B cell (primary cell): ENCODE measurements at regions of chr2 and their contacts with region 1.

Region 1: GRCh38 chr2:180980106-180980942 is at the start of gene UBE2E3:
- DNase-seq: peak; percentile 91
- ATAC-seq: peak; percentile 76
- H3K4me3 ChIP-seq: peak within 1 kb of the TSS; percentile 62 to 88 (median 68)
- H3K4me3 Mint-ChIP-seq: peak within 1 kb of the TSS; percentile 96
- H3K27ac ChIP-seq: peak within 1 kb of the TSS; percentile 4 to 64
- H3K27ac Mint-ChIP-seq: peak within 1 kb of the TSS; percentile 94
- H3K4me1 ChIP-seq: peaks cover 24 to 25% of the 10 kb centered on the region in 2 donors
- H3K4me1 Mint-ChIP-seq: peaks cover 33% of the 10 kb centered on the region
- H3K27me3 ChIP-seq: no peaks in the 10 kb centered on the region
- H3K27me3 Mint-ChIP-seq: no peaks in the 10 kb centered on the region
- CTCF ChIP-seq: peak; percentile 63
- total RNA-seq, gene UBE2E3: 27.5 and 31.6 TPM in 2 replicates

Region 2: GRCh38 chr2:180006781-180007579 is 973.3 kb before region 1 on chr2 and contains the start of gene CWC22:
- CTCF ChIA-PET with region 1: interaction called, 3 read pairs
- POLR2A ChIA-PET with region 1: no interaction called
- intact Hi-C with region 1: loop called (anchors 1 kb)
- DNase-seq: peak; percentile 96
- ATAC-seq: peak; percentile 95
- H3K4me3 ChIP-seq: peak within 1 kb of the TSS; percentile 89 to 98 (median 91)
- H3K4me3 Mint-ChIP-seq: peak within 1 kb of the TSS; percentile 94
- H3K27ac ChIP-seq: peak within 1 kb of the TSS; percentile 88 to 99
- H3K27ac Mint-ChIP-seq: peak within 1 kb of the TSS; percentile 99
- H3K4me1 ChIP-seq: peaks cover 12 to 18% of the 10 kb centered on the region in 2 donors
- H3K4me1 Mint-ChIP-seq: peaks cover 39% of the 10 kb centered on the region
- H3K27me3 ChIP-seq: no peaks in the 10 kb centered on the region
- H3K27me3 Mint-ChIP-seq: no peaks in the 10 kb centered on the region
- CTCF ChIP-seq: no peak
- total RNA-seq, gene CWC22: 28.6 and 28.7 TPM in 2 replicates

Region 3: DNA sequence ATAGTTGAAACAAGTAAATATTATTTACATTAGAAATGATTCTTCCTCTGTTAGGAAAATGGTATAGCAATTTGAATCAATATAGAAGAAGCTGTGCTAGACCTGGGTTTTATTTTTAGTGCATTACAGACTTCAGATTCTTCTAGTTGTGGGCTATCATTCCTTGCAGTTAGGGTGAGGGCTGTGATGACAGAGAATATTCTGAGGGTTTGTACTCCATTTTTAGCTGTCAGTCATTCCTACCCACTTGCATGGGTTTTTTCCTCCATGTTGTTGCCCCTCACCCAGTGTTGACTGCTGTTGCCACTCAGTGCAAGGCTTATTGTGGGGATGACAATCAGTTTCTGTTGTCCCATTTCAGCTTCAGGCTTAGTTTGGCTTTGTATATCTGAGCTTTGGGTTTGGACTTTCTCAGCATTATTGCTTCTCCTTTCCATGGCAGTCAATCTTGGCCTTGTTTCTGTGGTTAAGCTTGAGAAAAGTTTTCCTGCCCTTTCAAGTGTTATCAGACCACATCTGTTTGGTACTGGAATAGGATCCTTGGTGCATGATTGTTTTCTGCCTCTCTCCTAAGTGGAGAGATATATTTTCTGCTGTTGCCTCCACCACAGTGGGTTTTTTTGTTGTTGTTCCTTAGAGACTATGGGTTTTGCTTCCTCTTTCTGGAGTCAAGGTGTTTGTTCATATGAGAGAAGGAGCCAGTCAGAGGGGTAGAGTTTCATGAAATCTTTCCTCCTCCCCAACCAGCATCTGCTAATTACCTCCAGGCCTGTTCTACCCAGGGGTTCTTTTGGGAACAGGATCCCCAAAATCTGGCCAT is 660.5 kb before region 1 on chr2:
- CTCF ChIA-PET with region 1: no interaction called
- POLR2A ChIA-PET with region 1: no interaction called
- intact Hi-C with region 1: loop called (anchors 10 kb)
- DNase-seq: peak; percentile 48
- ATAC-seq: peak; percentile 90
- H3K4me3 ChIP-seq: no peak overlapping the region
- H3K4me3 Mint-ChIP-seq: peak overlapping the region; percentile 46
- H3K27ac ChIP-seq: peak overlapping the region in 1 of 2 donors; percentile 43
- H3K27ac Mint-ChIP-seq: peak overlapping the region; percentile 85
- H3K4me1 ChIP-seq: peaks cover 9% of the 10 kb centered on the region in 2 donors
- H3K4me1 Mint-ChIP-seq: peaks cover 14% of the 10 kb centered on the region
- H3K27me3 ChIP-seq: no peaks in the 10 kb centered on the region
- H3K27me3 Mint-ChIP-seq: no peaks in the 10 kb centered on the region
- CTCF ChIP-seq: no peak

Region 4: DNA sequence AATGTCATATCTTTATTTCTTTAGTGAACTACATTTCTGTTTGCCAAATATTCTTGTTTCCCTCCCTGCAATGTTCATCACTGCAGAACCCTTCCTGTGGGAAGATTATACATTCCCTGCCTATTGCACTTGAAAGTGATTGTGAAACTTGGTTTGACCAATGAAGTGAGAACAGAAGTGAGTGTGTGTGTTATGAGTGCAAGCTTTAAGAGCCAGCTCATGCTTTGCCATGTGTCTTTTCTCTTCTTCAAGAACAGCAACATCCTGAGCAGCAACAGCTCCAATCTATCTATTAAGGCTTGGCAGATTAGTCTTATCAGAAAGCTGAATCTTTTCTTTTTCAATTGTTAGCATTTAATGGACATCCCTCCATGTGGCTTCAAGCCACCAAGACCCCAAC is 41.9 kb before region 1 on chr2:
- CTCF ChIA-PET with region 1: no interaction called
- POLR2A ChIA-PET with region 1: no interaction called
- intact Hi-C with region 1: no loop called
- DNase-seq: no peak
- ATAC-seq: no peak
- H3K4me3 ChIP-seq: no peak overlapping the region
- H3K4me3 Mint-ChIP-seq: no peak overlapping the region
- H3K27ac ChIP-seq: no peak overlapping the region
- H3K27ac Mint-ChIP-seq: no peak overlapping the region
- H3K4me1 ChIP-seq: no peaks in the 10 kb centered on the region
- H3K4me1 Mint-ChIP-seq: peaks cover 11% of the 10 kb centered on the region
- H3K27me3 ChIP-seq: no peaks in the 10 kb centered on the region
- H3K27me3 Mint-ChIP-seq: peaks cover 3% of the 10 kb centered on the region
- CTCF ChIP-seq: no peak

Region 5: DNA sequence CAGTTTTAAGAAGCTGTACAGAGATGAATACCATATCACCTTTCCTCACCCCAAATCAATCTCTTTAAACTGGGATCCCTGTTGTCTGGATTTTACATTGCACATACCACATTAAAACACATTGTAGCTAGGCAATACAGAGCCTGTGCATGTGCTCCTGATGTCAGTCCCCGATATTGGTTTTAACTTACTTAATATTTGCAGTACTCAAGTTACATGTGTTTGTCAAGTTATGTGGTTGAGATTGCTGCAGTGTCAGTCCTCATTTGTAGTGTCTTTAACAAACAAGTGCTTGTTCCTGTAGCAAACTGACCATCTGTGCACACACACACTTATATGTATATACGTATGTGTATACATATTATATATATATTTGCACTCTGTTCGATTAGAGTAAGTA is 10.3 kb before region 1 on chr2:
- CTCF ChIA-PET with region 1: interaction called, 11 read pairs
- POLR2A ChIA-PET with region 1: no interaction called
- intact Hi-C with region 1: no loop called
- DNase-seq: no peak
- ATAC-seq: no peak
- H3K4me3 ChIP-seq: no peak overlapping the region
- H3K4me3 Mint-ChIP-seq: no peak overlapping the region
- H3K27ac ChIP-seq: no peak overlapping the region
- H3K27ac Mint-ChIP-seq: no peak overlapping the region
- H3K4me1 ChIP-seq: no peaks in the 10 kb centered on the region
- H3K4me1 Mint-ChIP-seq: no peaks in the 10 kb centered on the region
- H3K27me3 ChIP-seq: peaks cover 0 to 7% (median 0%) of the 10 kb centered on the region in 4 experiments
- H3K27me3 Mint-ChIP-seq: peaks cover 25% of the 10 kb centered on the region
- CTCF ChIP-seq: no peak